ENCODE measurements at regions of chr19 and their contacts with region 1.

Region 1: GRCh38 chr19:41206926-41207750 is 11.9 kb upstream of the AXL start:
- DNase-seq: no peak

Region 2: GRCh38 chr19:41249707-41250423 is 42.7 kb after region 1 on chr19:
- in situ Hi-C with region 1: loop called (anchors 10 kb)
- DNase-seq: no peak